ENCODE measurements at regions of chr5 and their contacts with region 1.

Region 1: DNA sequence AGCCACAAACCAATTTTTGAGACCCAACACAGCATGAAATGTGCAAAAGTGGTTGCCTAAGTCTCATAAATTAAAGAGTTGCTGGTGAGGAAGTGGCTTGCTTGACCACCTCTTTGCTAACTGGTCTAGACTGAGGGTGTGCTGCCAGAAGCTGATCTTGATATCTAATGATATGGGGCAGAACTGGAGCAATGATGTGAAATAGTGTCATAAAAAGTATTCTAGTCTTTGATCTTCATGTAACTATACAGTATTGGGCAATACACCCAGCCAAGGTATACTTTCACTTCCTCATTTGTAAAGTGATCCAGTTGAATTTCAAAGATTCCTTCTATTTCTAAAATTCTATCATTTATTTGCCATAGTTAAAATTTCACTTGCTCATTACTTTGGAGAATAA is 5.9 kb upstream of the YTHDC2 start:
- DNase-seq: no peak
- ATAC-seq: no peak
- H3K4me3 ChIP-seq: no peak overlapping the region
- H3K27ac ChIP-seq: no peak overlapping the region
- H3K4me1 ChIP-seq: no peaks in the 10 kb centered on the region
- H3K27me3 ChIP-seq: no peaks in the 10 kb centered on the region
- CTCF ChIP-seq: no peak

Region 2: DNA sequence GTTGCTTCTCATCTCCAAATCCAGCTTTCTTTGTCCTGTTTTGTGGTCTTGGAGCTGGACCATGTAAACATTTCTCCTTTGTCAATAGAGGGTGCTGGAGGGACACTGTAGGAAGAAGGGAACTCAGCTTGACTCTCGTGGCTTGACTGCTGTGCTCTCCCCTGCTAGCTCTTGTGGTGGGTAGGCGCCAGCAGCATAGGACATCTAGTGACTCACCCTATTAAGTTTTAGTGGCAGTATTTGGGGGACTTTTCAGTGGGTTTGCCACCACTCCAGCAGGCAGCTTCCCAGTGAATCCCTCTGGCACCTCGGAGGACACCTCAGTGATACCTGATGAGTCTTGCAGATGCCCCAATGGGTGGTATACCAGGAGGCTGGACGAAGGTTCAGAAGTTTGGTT is 170.6 kb before region 1 on chr5:
- intact Hi-C with region 1: loop called in 1 of 3 experiments (anchors 5 kb)
- DNase-seq: peak in 2 of 6 donors; percentile 19 to 36
- ATAC-seq: peak; percentile 78 to 94 (median 92)
- H3K4me3 ChIP-seq: no peak overlapping the region
- H3K27ac ChIP-seq: no peak overlapping the region
- H3K4me1 ChIP-seq: peaks cover 0 to 5% (median 0%) of the 10 kb centered on the region in 3 donors
- H3K27me3 ChIP-seq: no peaks in the 10 kb centered on the region
- CTCF ChIP-seq: peak in 3 of 4 donors; percentile 23 to 43 (median 30)

Region 3: GRCh38 chr5:113357696-113358476 is 149.7 kb before region 1 on chr5:
- intact Hi-C with region 1: loop called in 1 of 3 experiments (anchors 10 kb)
- DNase-seq: no peak
- ATAC-seq: peak in 2 of 4 donors; percentile 44 to 51
- H3K4me3 ChIP-seq: no peak overlapping the region
- H3K27ac ChIP-seq: no peak overlapping the region
- H3K4me1 ChIP-seq: peaks cover 0 to 24% (median 12%) of the 10 kb centered on the region in 3 donors
- H3K27me3 ChIP-seq: no peaks in the 10 kb centered on the region
- CTCF ChIP-seq: no peak

Region 4: GRCh38 chr5:113382731-113383130 is 124.9 kb before region 1 on chr5:
- intact Hi-C with region 1: loop called in 1 of 3 experiments (anchors 10 kb)
- DNase-seq: no peak
- ATAC-seq: no peak
- H3K4me3 ChIP-seq: no peak overlapping the region
- H3K27ac ChIP-seq: no peak overlapping the region
- H3K4me1 ChIP-seq: peaks cover 0 to 5% (median 5%) of the 10 kb centered on the region in 3 donors
- H3K27me3 ChIP-seq: no peaks in the 10 kb centered on the region
- CTCF ChIP-seq: no peak

Region 5: DNA sequence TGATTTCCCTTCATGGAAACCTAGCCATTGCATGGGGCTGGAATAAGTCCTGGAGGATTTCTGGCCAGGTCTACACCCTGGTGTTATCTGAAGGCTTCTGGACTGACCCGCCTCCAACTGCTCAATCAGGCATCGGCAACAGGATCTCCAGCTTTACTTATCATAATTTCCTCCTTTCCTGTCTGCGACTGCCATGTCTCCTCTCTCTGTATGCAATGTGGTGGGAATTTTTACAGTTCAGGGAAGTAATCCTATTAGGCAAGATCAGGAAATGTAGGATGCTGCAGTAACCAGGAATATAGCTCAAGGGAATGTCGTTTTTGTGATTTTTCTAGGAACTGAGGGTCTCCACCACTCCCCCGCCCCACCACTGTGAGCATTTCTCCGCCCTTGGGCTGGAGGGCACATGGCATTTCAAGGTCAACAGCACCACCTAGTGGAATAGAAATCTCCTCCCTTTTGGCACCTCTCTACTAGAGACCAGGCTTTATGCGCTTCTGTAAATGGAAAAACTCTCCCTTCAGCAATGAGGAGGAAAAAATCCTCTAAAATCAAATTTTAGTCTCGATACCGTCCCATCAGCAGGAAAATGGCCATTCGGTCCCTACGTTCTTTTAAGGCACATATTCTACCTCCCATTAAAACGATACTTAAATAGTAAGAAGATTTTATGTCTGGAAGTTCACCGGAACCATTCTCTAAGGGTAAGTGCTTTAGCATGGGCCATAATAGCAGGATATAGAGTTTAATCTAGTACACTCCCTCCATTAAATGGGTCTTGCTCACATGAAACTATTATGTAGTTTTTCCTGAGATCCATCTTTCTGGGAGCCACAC is 98.9 kb after region 1 on chr5:
- intact Hi-C with region 1: no loop called
- DNase-seq: peak in 3 of 6 donors; percentile 7 to 35 (median 34)
- ATAC-seq: peak; percentile 77 to 96 (median 94)
- H3K4me3 ChIP-seq: no peak overlapping the region
- H3K27ac ChIP-seq: no peak overlapping the region
- H3K4me1 ChIP-seq: no peaks in the 10 kb centered on the region
- H3K27me3 ChIP-seq: no peaks in the 10 kb centered on the region
- CTCF ChIP-seq: peak in 3 of 4 donors; percentile 59 to 70 (median 68)